GM13977 (cell line): ENCODE measurements at regions of chr17 and their contacts with region 1.

Region 1: GRCh38 chr17:37787055-37787757 is 42.3 kb upstream of the HNF1B start:
- DNase-seq: no peak
- CTCF ChIP-seq: no peak

Region 2: DNA sequence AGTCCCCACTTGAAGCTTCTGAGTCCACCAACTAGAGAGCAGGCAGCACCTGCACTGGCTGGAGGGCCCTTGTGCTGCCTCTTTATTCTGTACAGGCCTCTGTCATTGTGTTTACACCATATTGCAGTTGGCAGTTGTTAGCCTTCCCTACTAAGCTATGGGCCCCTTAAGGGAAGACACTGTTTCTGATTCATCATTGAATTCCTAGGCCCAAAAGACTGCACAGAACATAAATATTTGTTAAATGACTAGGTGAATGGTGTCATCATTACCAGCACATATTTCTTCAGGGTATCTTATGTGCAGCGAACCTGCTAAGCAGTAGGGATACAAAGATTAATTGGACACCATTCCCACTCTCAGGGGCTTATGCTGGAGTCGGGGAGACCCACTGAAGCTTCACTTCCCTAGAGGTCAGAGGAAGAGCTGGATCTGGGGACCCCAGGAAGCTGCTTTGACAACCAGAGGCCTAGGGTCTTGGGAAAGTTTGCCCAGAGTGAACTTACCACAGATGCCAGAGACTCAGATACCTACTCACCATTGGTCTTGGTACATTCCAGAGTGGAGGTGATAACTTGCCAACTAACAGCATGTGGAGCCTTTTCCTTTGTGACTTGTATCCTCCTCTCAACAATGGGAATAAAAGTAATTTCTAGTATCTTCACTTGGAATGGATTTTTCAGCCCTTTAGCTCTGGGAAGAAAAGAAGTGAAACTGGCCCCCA is 115.2 kb before region 1 on chr17:
- in situ Hi-C with region 1: no loop called
- DNase-seq: no peak
- CTCF ChIP-seq: no peak

Region 3: DNA sequence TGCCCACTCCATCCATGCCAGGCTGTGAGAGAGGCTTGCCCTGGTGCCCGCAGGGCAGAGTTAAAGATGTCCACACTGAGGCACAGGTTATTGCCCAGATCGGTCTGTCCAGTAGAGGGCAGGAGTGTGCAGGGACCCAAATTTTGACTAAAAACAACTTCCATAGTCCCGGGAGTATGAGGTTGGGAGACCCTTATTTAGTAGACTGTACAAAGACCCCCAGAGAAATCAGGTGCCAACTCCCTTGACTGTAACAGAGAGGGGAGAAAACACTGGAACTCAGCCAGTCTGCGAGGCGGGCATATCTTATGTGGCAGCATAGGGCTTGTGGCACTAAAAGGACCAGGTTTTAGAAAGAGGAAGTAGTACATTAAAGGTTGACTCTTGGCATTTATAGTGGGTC is 85.7 kb before region 1 on chr17:
- in situ Hi-C with region 1: loop called (anchors 10 kb)
- DNase-seq: peak; percentile 68
- CTCF ChIP-seq: peak; percentile 81